CD4-positive, alpha-beta memory T cell (primary cell): ENCODE measurements at regions of chr22 and their contacts with region 1.

Region 1: DNA sequence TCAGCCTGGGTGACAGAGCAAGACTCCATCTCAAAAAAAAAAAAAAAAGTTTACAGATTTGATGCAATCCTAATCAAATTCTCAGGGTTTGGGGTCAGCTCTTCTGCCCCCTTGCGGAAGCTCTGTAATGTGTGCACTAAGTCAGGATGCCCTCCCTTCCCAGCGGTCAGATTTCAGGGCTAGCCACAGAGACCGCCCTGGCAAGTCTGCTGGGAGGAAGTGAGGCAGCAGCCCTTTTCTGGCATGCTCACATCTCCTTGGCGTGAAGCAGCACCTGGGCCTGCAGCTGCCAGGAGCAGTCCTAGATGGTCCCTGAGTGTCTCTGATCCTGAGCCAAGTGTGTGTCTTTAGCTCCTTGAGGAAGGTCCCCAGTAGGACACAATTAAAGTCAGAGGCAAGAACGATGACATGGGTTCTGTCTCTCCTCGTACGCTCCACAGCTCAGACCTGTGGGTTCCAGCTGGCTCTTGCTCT is 10.9 kb upstream of the APOBEC3C start:
- DNase-seq: peak; percentile 75 to 82 (median 76)
- H3K4me3 ChIP-seq: no peak overlapping the region
- H3K4me3 Mint-ChIP-seq: peak overlapping the region in 2 of 8 donors; percentile 5 to 8
- H3K27ac ChIP-seq: no peak overlapping the region
- H3K27ac Mint-ChIP-seq: peak overlapping the region; percentile 15 to 84 (median 60)
- H3K4me1 ChIP-seq: peaks cover 16% of the 10 kb centered on the region
- H3K4me1 Mint-ChIP-seq: peaks cover 8 to 14% (median 13%) of the 10 kb centered on the region in 4 donors
- H3K27me3 ChIP-seq: no peaks in the 10 kb centered on the region
- H3K27me3 Mint-ChIP-seq: no peaks in the 10 kb centered on the region

Region 2: GRCh38 chr22:38766076-38766777 is 237.0 kb before region 1 on chr22:
- CTCF ChIA-PET with region 1: interaction called, 34 read pairs
- POLR2A ChIA-PET with region 1: interaction called, 3 read pairs
- intact Hi-C with region 1: loop called (anchors 2 kb)
- DNase-seq: peak in 4 of 5 donors; percentile 32 to 43 (median 38)
- H3K4me3 ChIP-seq: no peak overlapping the region
- H3K4me3 Mint-ChIP-seq: no peak overlapping the region
- H3K27ac ChIP-seq: no peak overlapping the region
- H3K27ac Mint-ChIP-seq: peak overlapping the region in 1 of 7 donors; percentile 68
- H3K4me1 ChIP-seq: peaks cover 13% of the 10 kb centered on the region
- H3K4me1 Mint-ChIP-seq: peaks cover 3 to 18% (median 12%) of the 10 kb centered on the region in 4 donors
- H3K27me3 ChIP-seq: no peaks in the 10 kb centered on the region
- H3K27me3 Mint-ChIP-seq: no peaks in the 10 kb centered on the region

Region 3: GRCh38 chr22:38973289-38974169 is 29.7 kb before region 1 on chr22:
- CTCF ChIA-PET with region 1: interaction called, 68 read pairs
- POLR2A ChIA-PET with region 1: interaction called, 6 read pairs
- intact Hi-C with region 1: loop called (anchors 1 kb)
- DNase-seq: peak; percentile 27 to 62 (median 53)
- H3K4me3 ChIP-seq: no peak overlapping the region
- H3K4me3 Mint-ChIP-seq: no peak overlapping the region
- H3K27ac ChIP-seq: no peak overlapping the region
- H3K27ac Mint-ChIP-seq: peak overlapping the region in 3 of 7 donors; percentile 32 to 69 (median 52)
- H3K4me1 ChIP-seq: no peaks in the 10 kb centered on the region
- H3K4me1 Mint-ChIP-seq: peaks cover 0 to 8% (median 3%) of the 10 kb centered on the region in 4 donors
- H3K27me3 ChIP-seq: no peaks in the 10 kb centered on the region
- H3K27me3 Mint-ChIP-seq: peaks cover 5 to 6% of the 10 kb centered on the region in 2 donors

Region 4: DNA sequence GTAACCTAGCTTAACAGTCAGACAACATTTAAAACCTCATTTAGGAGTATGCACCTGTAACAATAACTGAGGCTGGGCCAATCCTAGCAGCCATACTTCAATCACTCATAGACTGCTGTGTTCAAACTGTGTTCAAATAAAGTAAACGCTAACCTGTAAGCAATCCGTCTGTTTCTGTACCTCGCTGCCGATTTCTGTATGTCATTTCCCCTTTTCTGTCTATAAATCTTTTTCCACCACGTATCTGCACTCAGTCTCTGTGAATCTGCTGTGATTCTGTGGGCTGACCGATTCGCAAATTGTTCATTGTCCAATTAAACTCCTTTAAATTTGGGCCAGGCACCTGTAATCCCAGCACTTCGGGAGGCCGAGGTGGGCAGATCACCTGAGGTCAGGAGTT is 106.2 kb after region 1 on chr22:
- CTCF ChIA-PET with region 1: interaction called, 13 read pairs
- POLR2A ChIA-PET with region 1: no interaction called
- intact Hi-C with region 1: no loop called
- DNase-seq: no peak
- H3K4me3 ChIP-seq: no peak overlapping the region
- H3K4me3 Mint-ChIP-seq: no peak overlapping the region
- H3K27ac ChIP-seq: no peak overlapping the region
- H3K27ac Mint-ChIP-seq: no peak overlapping the region
- H3K4me1 ChIP-seq: no peaks in the 10 kb centered on the region
- H3K4me1 Mint-ChIP-seq: peaks cover 0 to 5% (median 2%) of the 10 kb centered on the region in 4 donors
- H3K27me3 ChIP-seq: no peaks in the 10 kb centered on the region
- H3K27me3 Mint-ChIP-seq: no peaks in the 10 kb centered on the region

Region 5: GRCh38 chr22:39123751-39124601 is 120.8 kb after region 1 on chr22:
- CTCF ChIA-PET with region 1: interaction called, 101 read pairs
- POLR2A ChIA-PET with region 1: interaction called, 4 read pairs
- intact Hi-C with region 1: loop called (anchors 1 kb)
- DNase-seq: no peak
- H3K4me3 ChIP-seq: no peak overlapping the region
- H3K4me3 Mint-ChIP-seq: no peak overlapping the region
- H3K27ac ChIP-seq: no peak overlapping the region
- H3K27ac Mint-ChIP-seq: no peak overlapping the region
- H3K4me1 ChIP-seq: peaks cover 4% of the 10 kb centered on the region
- H3K4me1 Mint-ChIP-seq: peaks cover 4 to 14% (median 11%) of the 10 kb centered on the region in 4 donors
- H3K27me3 ChIP-seq: no peaks in the 10 kb centered on the region
- H3K27me3 Mint-ChIP-seq: no peaks in the 10 kb centered on the region

Region 6: DNA sequence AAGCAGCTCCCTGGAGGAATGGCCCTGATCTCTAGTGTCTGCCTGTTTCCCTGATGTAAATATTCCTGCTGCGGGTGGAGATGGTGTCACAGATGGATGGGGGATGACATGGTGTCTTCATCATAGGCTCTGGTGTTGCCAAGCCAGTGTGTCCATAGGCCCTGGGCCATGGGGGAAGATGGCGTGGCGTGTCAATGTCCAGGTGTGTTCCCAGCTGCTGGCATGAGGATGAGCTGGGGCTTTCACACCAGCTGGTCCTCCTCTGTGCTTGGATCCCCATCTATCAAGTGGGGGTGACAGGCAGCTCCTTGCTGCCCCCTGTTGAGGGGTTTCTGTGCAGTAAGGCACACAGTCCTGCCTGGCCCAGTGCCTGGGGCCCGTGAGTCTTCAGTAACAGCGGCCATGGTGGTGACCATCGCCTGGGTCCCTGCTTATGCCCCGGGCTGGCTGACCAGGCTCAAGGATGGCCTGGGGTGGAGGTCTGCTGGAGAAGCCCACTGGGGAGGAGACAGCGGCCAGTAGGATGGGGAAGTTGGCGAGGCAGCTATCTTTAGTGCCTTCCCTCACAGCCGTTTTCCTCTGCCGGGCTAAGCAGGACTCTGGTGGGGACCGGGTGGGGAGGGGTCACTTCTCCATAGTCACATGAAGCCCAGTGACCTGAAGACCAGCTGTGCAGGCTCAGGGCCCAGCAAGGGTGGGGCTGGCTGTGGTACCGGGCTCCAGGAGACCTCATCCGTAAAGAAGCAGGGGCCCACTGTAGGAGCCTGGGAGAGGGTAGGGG is 303.6 kb after region 1 on chr22:
- CTCF ChIA-PET with region 1: interaction called, 7 read pairs
- POLR2A ChIA-PET with region 1: no interaction called
- intact Hi-C with region 1: loop called (anchors 2 kb)
- DNase-seq: peak in 4 of 5 donors; percentile 32 to 45 (median 42)
- H3K4me3 ChIP-seq: no peak overlapping the region
- H3K4me3 Mint-ChIP-seq: no peak overlapping the region
- H3K27ac ChIP-seq: no peak overlapping the region
- H3K27ac Mint-ChIP-seq: peak overlapping the region in 1 of 7 donors; percentile 16
- H3K4me1 ChIP-seq: peaks cover 12% of the 10 kb centered on the region
- H3K4me1 Mint-ChIP-seq: peaks cover 5 to 30% (median 12%) of the 10 kb centered on the region in 4 donors
- H3K27me3 ChIP-seq: no peaks in the 10 kb centered on the region
- H3K27me3 Mint-ChIP-seq: peaks cover 0 to 2% of the 10 kb centered on the region in 2 donors